ENCODE measurements at regions of chr11 and their contacts with region 1.

Region 1: DNA sequence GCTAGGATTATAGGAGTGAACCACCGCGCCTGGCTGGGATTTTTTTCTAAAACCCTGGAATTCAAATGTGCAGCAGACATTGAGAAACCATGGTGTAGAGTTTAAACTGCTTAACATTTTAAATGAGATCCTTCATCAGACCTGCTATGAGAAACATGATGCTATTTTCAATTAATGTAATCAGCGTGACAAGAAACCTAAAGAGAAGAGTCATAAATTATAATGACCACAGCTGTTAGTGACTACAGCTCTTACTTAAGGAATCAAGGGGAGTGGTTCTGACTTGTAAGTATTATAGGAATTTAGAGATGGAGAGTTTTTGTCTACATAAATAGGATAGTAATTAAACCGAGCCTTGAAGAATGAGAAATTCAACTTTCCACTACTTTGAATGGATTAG is 170.6 kb downstream of the BARX2 start:
- DNase-seq: no peak
- H3K4me3 Mint-ChIP-seq: no peak overlapping the region
- H3K27ac Mint-ChIP-seq: no peak overlapping the region
- H3K4me1 Mint-ChIP-seq: no peaks in the 10 kb centered on the region
- H3K27me3 Mint-ChIP-seq: peaks cover 1% of the 10 kb centered on the region

Region 2: GRCh38 chr11:129592191-129592590 is 45.9 kb after region 1 on chr11:
- intact Hi-C with region 1: loop called (anchors 1 kb)
- DNase-seq: no peak
- H3K4me3 Mint-ChIP-seq: no peak overlapping the region
- H3K27ac Mint-ChIP-seq: no peak overlapping the region
- H3K4me1 Mint-ChIP-seq: no peaks in the 10 kb centered on the region
- H3K27me3 Mint-ChIP-seq: peaks cover 5% of the 10 kb centered on the region

Region 3: GRCh38 chr11:129828301-129828836 is 282.1 kb after region 1 on chr11:
- intact Hi-C with region 1: no loop called
- DNase-seq: no peak
- H3K4me3 Mint-ChIP-seq: no peak overlapping the region
- H3K27ac Mint-ChIP-seq: no peak overlapping the region
- H3K4me1 Mint-ChIP-seq: no peaks in the 10 kb centered on the region
- H3K27me3 Mint-ChIP-seq: peaks cover 3% of the 10 kb centered on the region

Measured in activated T-helper 1 cell treated with anti-CD3 and anti-CD28 coated beads, Interleukin-12 subunit alpha, Interleukin-12 subunit beta, Interleukin-2, Interleukin-4 antibody, amounts not matched to agents 30 ng/mL and 10 ng/mL and 1 ng/mL, durations not matched to agents 14 hours and 24 hours and 36 hours (primary cell).